Cardiac septum (tissue), 1 donor: ENCODE measurements at regions of chr12 and their contacts with region 1.

Region 1: DNA sequence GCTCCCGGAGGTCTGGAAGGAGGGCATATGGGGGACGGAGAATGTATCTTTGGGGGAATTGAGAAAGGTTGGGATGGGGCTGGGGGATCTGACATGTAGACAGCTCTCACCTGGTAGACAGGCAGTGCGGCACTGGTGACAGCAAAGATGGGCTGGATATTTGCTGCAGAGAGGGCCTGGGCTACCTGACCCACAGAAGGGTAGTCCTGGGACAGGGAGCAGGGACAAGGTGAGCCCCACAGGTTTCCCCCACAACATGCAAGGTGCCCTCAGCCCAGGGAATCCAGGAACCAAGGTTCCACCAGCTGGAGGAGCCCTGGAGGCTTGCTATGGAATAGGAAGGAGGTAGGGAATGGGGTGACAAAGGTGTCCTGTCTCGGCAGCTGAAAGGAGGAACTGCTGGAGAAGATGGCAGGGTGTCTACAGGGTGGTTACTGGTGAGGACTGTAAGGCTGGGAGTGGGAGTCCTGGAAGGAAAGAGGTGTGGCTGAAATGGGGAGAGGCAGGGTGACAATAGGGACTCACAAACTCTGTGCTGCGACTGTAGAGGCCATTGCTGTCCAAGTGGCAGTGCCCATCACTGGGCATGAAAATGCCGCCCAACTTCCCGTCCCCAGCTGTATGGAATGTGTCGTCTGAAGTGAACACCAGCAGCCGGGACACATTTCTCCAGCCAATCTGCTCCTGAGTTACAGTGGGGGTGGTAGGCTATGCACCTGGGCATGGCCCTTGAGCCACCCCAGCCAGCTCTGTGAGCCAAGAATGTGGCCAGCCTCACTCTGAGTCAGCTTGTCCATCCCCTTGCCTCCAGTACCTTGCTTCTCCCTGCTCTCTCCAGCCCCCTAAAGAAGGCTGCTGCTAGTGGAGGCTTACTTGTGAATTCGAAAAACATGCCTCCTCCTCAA is 11.3 kb downstream of the ITGB7 start:
- DNase-seq: no peak

Region 2: DNA sequence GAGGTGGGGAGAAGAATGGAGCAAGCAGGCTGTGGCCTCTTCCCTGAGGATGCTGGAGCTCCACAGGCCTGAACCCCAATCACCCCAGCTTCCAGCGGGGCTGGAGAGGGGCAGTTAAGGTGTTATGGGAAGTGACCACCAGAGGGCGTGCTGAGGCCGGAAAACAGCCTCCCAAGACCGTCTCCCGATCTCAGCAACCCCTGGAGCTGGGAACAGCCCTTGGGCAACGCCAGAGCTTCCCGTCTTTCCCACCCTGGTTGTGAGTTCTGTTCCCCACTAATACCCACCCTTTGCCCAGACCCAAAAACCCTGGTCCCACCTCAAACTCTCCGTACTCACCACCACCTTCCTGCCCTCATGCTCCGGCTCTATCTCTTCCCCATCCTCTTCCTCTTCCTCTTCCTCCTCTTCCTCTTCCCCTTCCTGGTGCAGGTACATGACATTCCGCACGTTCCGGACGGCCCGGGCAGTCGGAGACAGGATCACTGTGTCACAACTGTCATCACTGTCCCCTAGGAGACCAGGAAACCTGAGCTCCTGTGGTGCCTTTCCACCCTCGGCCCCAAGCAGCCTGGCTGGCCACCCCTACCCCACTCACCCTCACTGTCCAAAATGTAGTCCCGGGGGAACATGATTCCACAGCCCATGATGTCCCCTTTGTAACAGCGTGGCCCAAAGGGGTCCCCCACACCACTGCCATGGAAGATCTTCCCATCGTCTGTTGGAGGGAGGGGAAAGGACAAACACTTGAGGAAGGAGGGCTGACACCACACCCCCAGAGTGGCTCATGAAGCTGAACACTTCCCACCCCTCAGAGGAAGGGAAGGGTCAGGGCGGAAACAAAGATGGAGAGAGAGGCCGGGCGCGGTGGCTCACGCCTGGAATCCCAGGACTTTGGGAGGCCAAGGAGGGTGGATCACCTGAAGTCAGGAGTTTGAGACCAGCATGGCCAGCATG is 129.5 kb before region 1 on chr12:
- intact Hi-C with region 1: loop called (anchors 2 kb)
- DNase-seq: peak; percentile 88

Region 3: GRCh38 chr12:53160000-53160399 is 35.8 kb before region 1 on chr12:
- intact Hi-C with region 1: loop called (anchors 2 kb)
- DNase-seq: no peak